ENCODE measurements at regions of chr3 and their contacts with region 1.

Region 1: GRCh38 chr3:12984023-12984823 is 89.0 kb downstream of the IQSEC1 start:
- DNase-seq: peak; percentile 43 to 84
- H3K4me3 ChIP-seq: no peak overlapping the region
- H3K27ac ChIP-seq: no peak overlapping the region
- H3K4me1 ChIP-seq: peaks cover 0 to 18% (median 13%) of the 10 kb centered on the region in 4 experiments; a peak in 6 of 7 replicates
- H3K27me3 ChIP-seq: no peaks in the 10 kb centered on the region
- CTCF ChIP-seq: peak; percentile 56 to 90 (median 79)
- EP300 ChIP-seq: no peak
- POLR2A ChIP-seq: no peak
- RAD21 ChIP-seq: peak; percentile 70 to 84

Region 2: GRCh38 chr3:12780751-12781150 is 203.5 kb before region 1 on chr3:
- CTCF ChIA-PET with region 1: no interaction called
- POLR2A ChIA-PET with region 1: no interaction called
- DNase-seq: no peak
- H3K4me3 ChIP-seq: no peak overlapping the region
- H3K27ac ChIP-seq: no peak overlapping the region
- H3K4me1 ChIP-seq: peaks cover 0 to 4% (median 1%) of the 10 kb centered on the region in 4 experiments; a peak in 2 of 7 replicates
- H3K27me3 ChIP-seq: no peaks in the 10 kb centered on the region
- CTCF ChIP-seq: no peak
- EP300 ChIP-seq: no peak
- POLR2A ChIP-seq: no peak
- RAD21 ChIP-seq: no peak

Region 3: DNA sequence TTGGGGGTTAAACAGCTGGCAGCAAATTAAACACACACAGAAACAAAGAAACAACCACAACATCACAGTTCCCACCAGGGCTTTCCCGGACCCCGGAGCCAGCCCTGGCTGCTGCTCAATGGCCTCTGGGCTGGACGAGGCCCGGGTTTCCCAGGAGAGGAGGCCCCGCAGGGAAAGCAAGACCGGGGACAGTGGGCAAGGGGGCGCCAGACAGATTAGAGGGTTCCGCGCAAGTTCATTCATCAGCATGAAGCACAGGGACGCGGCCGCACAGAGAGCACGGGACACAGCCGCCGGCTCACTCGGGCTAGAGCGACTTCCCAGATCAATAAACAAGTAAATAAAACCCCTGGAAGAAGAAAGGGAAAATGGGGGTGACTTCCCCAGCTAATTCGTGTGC is 76.5 kb before region 1 on chr3:
- CTCF ChIA-PET with region 1: interaction called, 45 read pairs
- POLR2A ChIA-PET with region 1: no interaction called
- DNase-seq: no peak
- H3K4me3 ChIP-seq: no peak overlapping the region
- H3K27ac ChIP-seq: no peak overlapping the region
- H3K4me1 ChIP-seq: no peaks in the 10 kb centered on the region
- H3K27me3 ChIP-seq: no peaks in the 10 kb centered on the region
- CTCF ChIP-seq: no peak
- EP300 ChIP-seq: no peak
- POLR2A ChIP-seq: no peak
- RAD21 ChIP-seq: no peak

Region 4: GRCh38 chr3:12930964-12931905 is 53.0 kb before region 1 on chr3:
- CTCF ChIA-PET with region 1: interaction called, 21 read pairs
- POLR2A ChIA-PET with region 1: no interaction called
- DNase-seq: no peak
- H3K4me3 ChIP-seq: no peak overlapping the region
- H3K27ac ChIP-seq: no peak overlapping the region
- H3K4me1 ChIP-seq: no peaks in the 10 kb centered on the region
- H3K27me3 ChIP-seq: no peaks in the 10 kb centered on the region
- CTCF ChIP-seq: no peak
- EP300 ChIP-seq: no peak
- POLR2A ChIP-seq: no peak
- RAD21 ChIP-seq: no peak

Region 5: DNA sequence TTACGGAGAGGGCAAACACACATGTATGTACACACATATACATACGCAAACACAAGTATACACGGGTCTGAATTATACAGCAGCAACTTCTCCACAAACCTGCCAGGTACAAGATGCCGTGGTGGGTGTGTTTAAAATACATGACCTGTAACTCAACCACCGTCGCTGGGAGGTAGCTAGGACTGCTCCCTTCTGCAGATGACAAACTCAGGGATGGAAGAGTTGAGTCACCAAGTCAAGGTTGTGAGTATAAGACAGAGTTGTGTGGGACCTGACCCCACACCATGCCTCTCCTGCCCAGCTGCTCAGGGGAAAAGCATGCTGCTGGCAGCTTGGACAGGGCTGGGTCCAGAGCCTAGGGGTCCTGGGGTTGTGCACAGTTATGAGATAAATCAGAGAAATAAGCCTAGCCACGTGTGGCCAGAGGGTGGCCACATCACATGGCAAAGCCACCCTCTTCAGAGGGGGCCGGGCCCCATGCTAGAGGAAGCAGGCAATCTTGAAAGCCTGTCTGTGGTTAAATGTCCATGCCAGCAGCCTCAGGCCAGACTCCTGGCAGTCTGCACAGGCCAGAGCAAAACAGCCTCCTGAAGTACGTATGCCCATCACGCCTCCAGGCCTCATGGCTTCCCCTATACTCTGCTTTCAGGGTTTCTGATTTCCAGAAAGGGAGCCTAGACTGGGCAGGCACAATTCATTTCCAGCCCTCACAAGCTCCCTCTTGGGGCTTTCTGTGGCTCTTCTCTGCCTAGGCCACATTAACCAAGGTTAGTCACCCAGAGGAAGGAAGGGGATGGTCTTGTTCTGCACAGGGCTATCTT is 35.1 kb before region 1 on chr3:
- CTCF ChIA-PET with region 1: interaction called, 33 read pairs
- POLR2A ChIA-PET with region 1: no interaction called
- DNase-seq: no peak
- H3K4me3 ChIP-seq: no peak overlapping the region
- H3K27ac ChIP-seq: no peak overlapping the region
- H3K4me1 ChIP-seq: peaks cover 0 to 9% (median 6%) of the 10 kb centered on the region in 4 experiments; a peak in 6 of 7 replicates
- H3K27me3 ChIP-seq: no peaks in the 10 kb centered on the region
- CTCF ChIP-seq: peak in 1 of 3 experiments; percentile 9; a peak in 1 of 4 replicates
- EP300 ChIP-seq: no peak
- POLR2A ChIP-seq: no peak
- RAD21 ChIP-seq: no peak

Region 6: DNA sequence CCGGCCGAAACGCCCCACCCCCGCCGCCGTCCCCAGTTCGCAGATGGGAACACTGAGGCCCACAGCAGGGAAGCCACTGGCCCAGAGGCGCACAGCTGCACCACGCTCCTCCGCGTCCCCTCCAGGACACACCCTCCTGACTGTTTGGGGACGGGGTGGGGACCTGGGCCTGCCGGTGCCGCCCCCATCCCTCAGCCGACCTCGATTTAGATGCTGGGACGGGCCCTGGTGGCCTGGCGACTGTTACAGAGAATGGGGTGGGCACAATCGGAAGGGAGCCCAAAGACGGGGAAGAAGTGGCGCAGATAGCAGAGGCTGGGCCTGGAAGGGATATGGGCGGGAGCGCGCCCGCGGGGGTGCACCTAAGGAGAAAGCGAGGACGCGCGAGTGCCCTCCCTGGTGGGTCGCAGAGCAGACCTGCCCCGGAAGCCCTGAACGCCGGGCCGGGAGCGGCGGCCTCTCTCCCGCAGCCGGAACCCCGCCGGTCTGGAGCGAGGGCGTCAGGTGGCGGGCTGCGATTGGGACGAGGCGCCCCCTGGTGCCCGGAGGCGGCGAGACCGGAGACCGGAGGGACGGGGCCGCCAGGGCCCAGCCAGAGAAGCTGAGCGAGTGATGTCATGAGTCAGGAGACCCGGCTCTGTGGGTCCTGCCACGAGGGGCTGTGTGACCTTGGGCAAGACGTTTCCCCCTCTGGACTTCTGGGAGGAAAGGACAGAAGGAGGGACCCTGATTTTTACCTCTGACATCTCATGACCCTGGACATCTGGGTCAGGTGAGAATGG is 10.6 kb after region 1 on chr3:
- CTCF ChIA-PET with region 1: interaction called, 267 read pairs
- POLR2A ChIA-PET with region 1: interaction called, 5 read pairs
- DNase-seq: peak; percentile 60 to 97
- H3K4me3 ChIP-seq: peak overlapping the region; percentile 52 to 73 (median 60)
- H3K27ac ChIP-seq: no peak overlapping the region; the same call in 1 of the 2 replicates
- H3K4me1 ChIP-seq: peaks cover 0 to 14% (median 10%) of the 10 kb centered on the region in 4 experiments; a peak in 6 of 7 replicates
- H3K27me3 ChIP-seq: peaks cover 0 to 12% (median 8%) of the 10 kb centered on the region in 4 experiments; a peak in 3 of 7 replicates
- CTCF ChIP-seq: peak in 2 of 3 experiments; percentile 88 to 90; a peak in 3 of 4 replicates
- EP300 ChIP-seq: 0 out of 3 replicates have a peak, but pooled peaks of 1 of the 2 experiments have one; percentile 29
- POLR2A ChIP-seq: no peak
- RAD21 ChIP-seq: peak; percentile 60 to 72

Measured in H1 (cell line).